Left cardiac atrium (tissue), 4 donors: ENCODE measurements at regions of chrX and their contacts with region 1.

Region 1: DNA sequence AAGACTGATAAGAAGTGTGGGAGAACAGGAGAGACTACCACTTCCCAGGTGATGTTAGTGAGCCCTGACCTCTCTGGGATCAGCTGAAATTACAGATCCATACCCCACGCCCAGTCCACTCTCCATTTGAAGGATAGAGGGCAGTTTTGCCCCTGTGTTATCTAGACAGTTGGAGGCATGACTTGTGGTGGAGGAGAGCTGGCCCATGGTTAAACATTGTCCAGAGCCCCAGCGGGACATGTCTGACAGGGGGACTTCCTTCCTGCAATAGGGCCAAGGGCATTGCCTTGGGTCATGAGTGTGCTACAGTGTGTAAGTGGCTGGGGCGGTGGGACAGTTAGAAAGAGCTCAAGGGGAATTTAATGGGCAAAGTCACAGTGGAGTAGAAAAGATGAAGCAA is 181.1 kb downstream of the MID1IP1 start:
- DNase-seq: no peak
- ATAC-seq: no peak

Region 2: GRCh38 chrX:38726597-38726996 is 255.8 kb before region 1 on chrX:
- intact Hi-C with region 1: no loop called
- DNase-seq: no peak
- ATAC-seq: peak in 1 of 2 donors; percentile 34

Region 3: GRCh38 chrX:38805432-38806389 is 176.7 kb before region 1 on chrX:
- intact Hi-C with region 1: loop called in 1 of 2 experiments (anchors 5 kb)
- DNase-seq: peak; percentile 74
- ATAC-seq: peak; percentile 31 to 59

Region 4: DNA sequence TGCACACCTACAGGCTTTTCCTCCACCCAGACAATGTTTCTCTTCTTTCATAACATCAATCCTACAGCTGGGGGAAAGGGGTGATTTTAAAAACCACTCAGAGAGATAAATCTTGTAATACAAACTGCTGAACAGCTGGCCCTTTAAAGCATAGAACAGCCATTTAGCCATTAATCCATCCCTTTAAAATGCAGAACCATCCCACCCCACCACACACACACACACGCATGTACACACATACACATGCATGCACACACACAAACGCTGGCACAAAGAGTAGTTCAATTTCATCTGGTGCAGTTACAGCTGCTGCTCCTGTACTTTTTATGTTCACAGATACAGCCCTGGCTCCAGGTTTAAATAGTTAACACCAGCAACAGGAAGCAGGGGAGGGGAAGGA is 245.0 kb after region 1 on chrX:
- intact Hi-C with region 1: no loop called
- DNase-seq: no peak
- ATAC-seq: no peak